Mammary epithelial cell (primary cell): ENCODE measurements at regions of chr2 and their contacts with region 1.

Region 1: GRCh38 chr2:210002158-210003157 is at the start of gene RPE:
- DNase-seq: peak; percentile 93
- H3K4me3 ChIP-seq: peak within 1 kb of the TSS; percentile 65 to 93 (median 82)
- H3K27ac ChIP-seq: peak within 1 kb of the TSS; percentile 41
- H3K4me1 ChIP-seq: peaks cover 23% of the 10 kb centered on the region
- H3K27me3 ChIP-seq: no peaks in the 10 kb centered on the region
- CTCF ChIP-seq: no peak
- total RNA-seq, gene RPE: 67.1 to 102 TPM

Region 2: GRCh38 chr2:209431701-209432100 is 570.8 kb before region 1 on chr2:
- CTCF ChIA-PET with region 1: no interaction called
- dilution Hi-C with region 1: no loop called
- in situ Hi-C with region 1: no loop called
- intact Hi-C with region 1: loop called (anchors 5 kb)
- DNase-seq: peak; percentile 93
- H3K4me3 ChIP-seq: no peak overlapping the region
- H3K27ac ChIP-seq: peak overlapping the region; percentile 75
- H3K4me1 ChIP-seq: peaks cover 17% of the 10 kb centered on the region
- H3K27me3 ChIP-seq: no peaks in the 10 kb centered on the region
- CTCF ChIP-seq: no peak

Region 3: DNA sequence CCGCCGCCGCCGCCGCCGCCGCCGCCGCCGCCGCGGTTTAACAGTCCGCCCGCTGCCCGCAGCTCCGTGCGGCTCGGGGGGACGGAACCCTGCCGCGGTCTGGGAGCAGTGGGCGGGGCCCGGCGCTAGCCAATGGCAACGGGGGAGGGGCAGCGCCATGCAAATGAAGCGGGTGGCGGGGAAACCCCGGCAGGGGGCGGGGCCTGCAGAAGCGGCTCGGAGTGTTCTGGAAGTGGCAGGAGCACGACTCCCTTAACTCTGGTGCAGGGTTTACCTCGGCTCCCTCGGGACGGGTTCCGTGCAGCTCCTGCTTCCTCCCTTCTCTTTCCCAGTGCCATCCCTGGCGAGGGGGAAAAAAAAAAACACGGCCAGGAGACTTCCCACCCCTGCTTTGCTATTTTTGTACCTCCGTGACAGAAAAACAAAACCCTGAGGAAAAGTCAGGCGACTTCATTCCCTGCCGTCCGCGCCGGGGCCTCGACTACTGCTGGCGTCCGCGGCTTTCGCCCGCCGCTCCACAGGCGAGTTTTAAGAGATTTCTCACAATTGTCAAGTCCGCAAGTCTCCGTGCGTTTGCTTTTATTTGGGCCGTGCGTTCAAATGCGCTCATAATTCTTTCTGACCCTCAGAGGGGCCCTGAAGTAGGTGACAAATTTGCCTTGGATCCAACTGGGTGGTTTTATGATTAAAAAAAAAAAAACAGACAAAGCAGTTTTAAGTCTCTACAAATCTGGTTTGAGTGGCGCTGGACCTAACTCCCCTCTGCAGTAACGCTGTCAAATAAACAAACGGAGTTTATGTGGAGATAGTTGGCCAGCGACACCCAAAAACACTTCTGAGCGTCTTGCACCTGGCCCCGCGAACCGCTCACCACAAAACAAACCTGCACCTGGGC is 169.1 kb after region 1 on chr2 and contains the start of gene KANSL1L:
- CTCF ChIA-PET with region 1: interaction called, 8 read pairs
- dilution Hi-C with region 1: no loop called
- in situ Hi-C with region 1: no loop called
- intact Hi-C with region 1: loop called (anchors 2 kb)
- DNase-seq: peak; percentile 93
- H3K4me3 ChIP-seq: peak within 1 kb of the TSS; percentile 89 to 96 (median 89)
- H3K27ac ChIP-seq: peak within 1 kb of the TSS; percentile 99
- H3K4me1 ChIP-seq: peaks cover 7% of the 10 kb centered on the region
- H3K27me3 ChIP-seq: no peaks in the 10 kb centered on the region
- CTCF ChIP-seq: no peak
- total RNA-seq, gene KANSL1L: 6.1 to 12.2 TPM